Activated T-helper 2 cell treated with anti-CD3 and anti-CD28 coated beads, Interferon-gamma antibody, Interleukin-2, Interleukin-4, amounts not matched to agents 10 μg/mL and 5 μg/mL and 100 μg/mL, durations not matched to agents 14 hours and 24 hours and 36 hours (primary cell): ENCODE measurements at regions of chr9 and their contacts with region 1.

Region 1: GRCh38 chr9:125558453-125559092 is 148.4 kb downstream of the MAPKAP1 start:
- DNase-seq: peak; percentile 36
- H3K4me3 Mint-ChIP-seq: no peak overlapping the region
- H3K27ac Mint-ChIP-seq: no peak overlapping the region
- H3K4me1 Mint-ChIP-seq: peaks cover 27% of the 10 kb centered on the region
- H3K27me3 Mint-ChIP-seq: no peaks in the 10 kb centered on the region

Region 2: DNA sequence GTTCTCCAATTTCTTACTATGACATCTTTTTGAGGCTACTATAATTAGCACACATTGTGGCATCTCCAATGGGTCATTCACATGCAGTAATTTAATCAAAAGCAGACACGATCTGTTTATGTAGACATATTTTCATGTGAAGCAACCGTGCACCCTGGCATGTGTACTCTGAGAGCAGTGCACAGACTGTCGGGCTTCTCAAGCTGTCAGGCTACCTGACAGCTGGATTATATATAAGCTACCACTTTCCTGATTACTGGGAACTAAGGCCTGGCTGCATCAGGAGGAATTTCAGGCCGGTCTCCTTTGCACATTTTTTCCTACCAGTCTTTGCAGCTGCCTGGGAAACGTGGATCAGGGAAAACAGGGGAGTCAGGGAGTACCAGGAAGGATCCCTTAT is 49.1 kb before region 1 on chr9:
- intact Hi-C with region 1: no loop called
- DNase-seq: no peak
- H3K4me3 Mint-ChIP-seq: no peak overlapping the region
- H3K27ac Mint-ChIP-seq: no peak overlapping the region
- H3K4me1 Mint-ChIP-seq: peaks cover 18% of the 10 kb centered on the region
- H3K27me3 Mint-ChIP-seq: no peaks in the 10 kb centered on the region

Region 3: GRCh38 chr9:125568621-125569020 is 10.0 kb after region 1 on chr9:
- intact Hi-C with region 1: no loop called
- DNase-seq: no peak
- H3K4me3 Mint-ChIP-seq: no peak overlapping the region
- H3K27ac Mint-ChIP-seq: no peak overlapping the region
- H3K4me1 Mint-ChIP-seq: peaks cover 9% of the 10 kb centered on the region
- H3K27me3 Mint-ChIP-seq: no peaks in the 10 kb centered on the region

Region 4: GRCh38 chr9:125608489-125609224 is 50.1 kb after region 1 on chr9:
- intact Hi-C with region 1: loop called (anchors 2 kb)
- DNase-seq: no peak
- H3K4me3 Mint-ChIP-seq: no peak overlapping the region
- H3K27ac Mint-ChIP-seq: peak overlapping the region; percentile 74
- H3K4me1 Mint-ChIP-seq: peaks cover 41% of the 10 kb centered on the region
- H3K27me3 Mint-ChIP-seq: no peaks in the 10 kb centered on the region